Psoas muscle (tissue), 8 donors: ENCODE measurements at regions of chr6 and their contacts with region 1.

Region 1: DNA sequence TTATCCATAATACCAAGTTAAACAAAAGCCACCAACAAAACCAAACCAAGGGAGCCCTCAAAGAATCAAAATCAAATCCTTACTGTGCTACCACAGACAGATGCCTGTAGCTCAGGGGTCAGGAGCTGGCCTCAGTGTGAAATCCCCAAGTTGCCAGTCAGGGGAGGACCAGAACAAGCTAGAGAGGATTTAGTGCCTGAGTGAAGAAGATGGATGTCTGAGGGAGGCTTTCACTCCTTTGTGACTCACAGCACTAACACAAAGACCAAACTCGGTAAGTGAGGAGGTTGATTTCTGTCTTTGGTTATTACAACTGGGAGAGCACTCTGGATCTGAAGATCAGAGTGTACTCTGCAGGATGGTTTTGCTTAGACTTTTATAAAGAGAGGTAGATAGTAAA is 189.9 kb upstream of the ZNF184 start:
- DNase-seq: no peak
- ATAC-seq: no peak
- H3K4me3 ChIP-seq: no peak overlapping the region
- H3K27ac ChIP-seq: no peak overlapping the region
- H3K4me1 ChIP-seq: no peaks in the 10 kb centered on the region
- H3K27me3 ChIP-seq: peaks cover 3 to 22% (median 6%) of the 10 kb centered on the region in 3 donors
- CTCF ChIP-seq: no peak

Region 2: DNA sequence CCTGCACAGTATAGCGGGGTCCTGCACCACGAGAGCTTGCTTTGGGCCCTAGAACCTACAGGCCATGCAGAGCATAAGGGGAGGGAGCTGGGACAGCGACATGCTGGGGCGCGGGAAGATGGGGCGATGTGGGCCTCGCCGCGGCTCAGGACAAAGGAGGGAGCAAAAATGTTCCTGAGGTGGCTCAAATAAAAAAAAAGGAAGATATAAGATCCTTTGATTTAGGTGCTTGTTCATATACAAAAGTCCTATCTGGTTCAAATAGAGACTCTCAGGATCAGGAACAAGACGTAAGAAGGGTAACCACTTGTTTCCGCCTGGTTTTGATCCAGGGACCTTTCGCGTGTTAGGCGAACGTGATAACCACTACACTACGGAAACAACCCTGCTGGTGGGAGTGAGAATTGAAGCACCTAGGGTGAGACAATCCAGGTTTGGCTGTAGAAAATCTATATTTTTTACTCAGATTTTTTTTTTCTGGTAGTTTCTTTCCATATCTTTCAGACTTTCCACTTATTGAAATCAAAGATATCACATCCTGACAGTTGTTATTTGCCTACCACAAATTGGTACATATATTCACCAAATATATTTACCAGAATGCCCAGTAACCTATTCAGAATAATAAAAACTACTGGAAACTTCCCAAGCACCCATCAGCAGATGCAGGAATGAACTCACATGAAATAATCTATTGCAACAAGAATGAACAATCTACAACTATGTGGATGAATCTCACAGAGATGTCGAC is 12.0 kb before region 1 on chr6:
- intact Hi-C with region 1: loop called in 1 of 2 experiments (anchors 1 kb)
- DNase-seq: no peak
- ATAC-seq: no peak
- H3K4me3 ChIP-seq: no peak overlapping the region
- H3K27ac ChIP-seq: no peak overlapping the region
- H3K4me1 ChIP-seq: no peaks in the 10 kb centered on the region
- H3K27me3 ChIP-seq: peaks cover 0 to 13% (median 5%) of the 10 kb centered on the region in 3 donors
- CTCF ChIP-seq: no peak

Region 3: DNA sequence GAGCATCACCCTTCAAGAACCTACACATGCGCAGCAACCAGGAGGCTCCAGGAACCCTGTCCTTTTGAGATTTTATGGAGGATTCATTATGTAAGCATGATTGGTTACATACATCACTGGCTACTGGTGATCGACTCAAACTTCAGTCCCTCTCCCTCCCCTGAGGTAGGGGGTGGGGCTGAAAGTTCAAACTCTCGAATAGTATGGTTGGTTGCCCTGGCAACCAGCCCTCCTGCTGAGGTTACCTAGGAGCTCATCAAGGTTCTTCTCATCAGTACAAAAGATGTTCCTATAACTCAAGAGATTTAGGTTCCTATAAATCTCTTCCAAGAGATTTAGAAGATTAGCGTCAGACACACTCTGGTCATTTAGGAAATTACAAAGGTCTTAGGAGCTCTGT is 540.4 kb after region 1 on chr6:
- intact Hi-C with region 1: no loop called
- DNase-seq: no peak
- ATAC-seq: no peak
- H3K4me3 ChIP-seq: no peak overlapping the region
- H3K27ac ChIP-seq: no peak overlapping the region
- H3K4me1 ChIP-seq: no peaks in the 10 kb centered on the region
- H3K27me3 ChIP-seq: peaks cover 14 to 74% (median 15%) of the 10 kb centered on the region in 3 donors
- CTCF ChIP-seq: no peak